Adrenal gland (tissue), 19 donors: ENCODE measurements at regions of chr11 and their contacts with region 1.

Region 1: DNA sequence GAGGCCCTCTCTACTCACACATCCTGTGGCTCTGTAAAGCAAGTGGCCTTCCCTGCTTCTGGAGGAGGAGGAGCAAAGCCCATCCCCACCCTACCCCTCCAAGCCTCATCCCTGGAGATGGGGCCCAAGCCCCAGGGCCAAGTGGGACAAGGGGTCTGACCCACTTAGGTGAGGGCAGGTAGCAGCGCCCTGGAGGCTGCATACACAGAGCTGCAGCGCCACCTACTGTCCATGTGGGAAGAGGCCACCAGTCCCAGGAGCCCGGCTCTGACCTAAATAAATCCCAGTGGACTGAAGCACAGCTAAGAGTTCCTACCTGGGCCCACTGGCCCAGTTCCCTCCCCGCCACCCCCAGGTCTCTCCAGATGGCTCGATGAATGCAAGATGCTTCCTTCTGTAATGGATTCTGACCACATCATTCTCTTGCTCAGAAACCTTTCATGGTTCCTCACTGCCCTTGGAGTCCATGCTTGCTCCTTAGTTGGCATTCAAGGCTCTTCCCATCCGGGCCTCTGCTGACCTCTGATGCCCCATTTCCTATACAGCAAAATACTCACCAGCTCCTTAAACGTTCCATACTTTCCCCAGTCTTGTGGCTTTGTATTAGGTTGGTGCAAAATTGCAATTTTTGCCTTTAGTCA is 62.1 kb downstream of the THAP12 start:
- DNase-seq: peak; percentile 63 to 91 (median 85)
- H3K4me3 ChIP-seq: no peak overlapping the region
- H3K27ac ChIP-seq: no peak overlapping the region
- H3K4me1 ChIP-seq: peaks cover 0 to 9% of the 10 kb centered on the region in 2 donors
- H3K27me3 ChIP-seq: peaks cover 6% of the 10 kb centered on the region
- CTCF ChIP-seq: peak; percentile 90 to 98 (median 94)
- POLR2A ChIP-seq: no peak

Region 2: DNA sequence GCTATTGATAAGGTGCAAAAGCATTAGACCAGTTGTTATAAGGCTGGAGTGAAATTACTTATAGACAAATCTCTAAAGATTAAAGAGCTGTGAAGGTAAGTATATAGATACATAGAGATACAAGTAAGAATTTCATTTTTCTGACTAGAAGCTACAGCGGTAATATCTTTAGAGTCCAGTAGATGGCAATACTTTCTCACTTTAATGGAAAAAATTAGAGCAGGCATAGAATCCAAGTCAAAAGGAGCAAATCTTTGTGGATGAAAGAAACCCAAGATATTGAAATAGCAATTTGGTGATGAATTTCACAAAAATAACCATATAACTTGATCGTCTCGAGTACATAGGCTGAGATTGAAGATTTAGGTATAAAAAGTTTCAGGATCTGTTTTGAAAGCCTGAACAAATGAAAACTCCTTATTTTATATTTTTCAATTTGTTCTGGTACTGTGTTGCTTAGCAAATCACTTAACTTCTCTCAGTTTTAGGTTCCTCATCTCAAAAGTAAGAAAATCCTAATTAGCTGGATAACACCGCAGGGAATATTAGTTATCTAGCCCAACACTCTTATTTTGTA is 421.9 kb before region 1 on chr11:
- intact Hi-C with region 1: loop called (anchors 10 kb)
- DNase-seq: no peak
- H3K4me3 ChIP-seq: no peak overlapping the region
- H3K27ac ChIP-seq: no peak overlapping the region
- H3K4me1 ChIP-seq: no peaks in the 10 kb centered on the region
- H3K27me3 ChIP-seq: no peaks in the 10 kb centered on the region
- CTCF ChIP-seq: peak; percentile 54 to 87 (median 76)
- POLR2A ChIP-seq: no peak

Region 3: GRCh38 chr11:75907906-75908527 is 410.8 kb before region 1 on chr11:
- intact Hi-C with region 1: loop called in 1 of 2 experiments (anchors 10 kb)
- DNase-seq: no peak
- H3K4me3 ChIP-seq: no peak overlapping the region
- H3K27ac ChIP-seq: no peak overlapping the region
- H3K4me1 ChIP-seq: peaks cover 5 to 8% of the 10 kb centered on the region in 2 donors
- H3K27me3 ChIP-seq: no peaks in the 10 kb centered on the region
- CTCF ChIP-seq: no peak
- POLR2A ChIP-seq: no peak

Region 4: GRCh38 chr11:76207642-76208401 is 111.0 kb before region 1 on chr11:
- intact Hi-C with region 1: loop called (anchors 2 kb)
- DNase-seq: peak; percentile 72 to 85 (median 81)
- H3K4me3 ChIP-seq: peak overlapping the region in 3 of 4 donors; percentile 62 to 86 (median 65)
- H3K27ac ChIP-seq: peak overlapping the region in 2 of 5 donors; percentile 69 to 83
- H3K4me1 ChIP-seq: peaks cover 27 to 45% of the 10 kb centered on the region in 2 donors
- H3K27me3 ChIP-seq: no peaks in the 10 kb centered on the region
- CTCF ChIP-seq: peak; percentile 85 to 98 (median 94)
- POLR2A ChIP-seq: no peak

Region 5: DNA sequence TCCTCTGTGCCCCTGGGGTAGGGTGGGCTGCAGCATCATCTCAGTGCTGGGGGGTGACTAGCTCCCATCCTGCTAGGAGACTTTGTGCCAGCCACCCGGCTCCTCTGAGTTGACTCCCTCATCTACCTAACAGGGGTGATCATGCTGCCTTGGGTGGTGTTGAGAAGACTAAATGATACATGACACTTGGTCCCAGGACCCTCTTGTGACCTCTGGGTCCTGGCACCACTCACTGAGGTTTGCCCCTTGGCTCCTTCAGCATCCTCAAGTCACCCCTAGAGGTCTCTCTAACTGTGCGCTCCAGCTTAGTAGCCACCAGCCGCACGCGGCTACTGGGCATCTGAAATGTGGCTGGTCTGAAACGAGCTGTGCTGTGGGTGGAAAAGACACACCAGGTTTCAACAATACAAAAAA is 279.6 kb after region 1 on chr11:
- intact Hi-C with region 1: no loop called
- DNase-seq: peak in 6 of 7 donors; percentile 52 to 66 (median 63)
- H3K4me3 ChIP-seq: no peak overlapping the region
- H3K27ac ChIP-seq: no peak overlapping the region
- H3K4me1 ChIP-seq: peaks cover 7 to 13% of the 10 kb centered on the region in 2 donors
- H3K27me3 ChIP-seq: no peaks in the 10 kb centered on the region
- CTCF ChIP-seq: peak in 5 of 6 experiments; percentile 39 to 51 (median 47)
- POLR2A ChIP-seq: no peak